GM10248 (cell line): ENCODE measurements at regions of chr11 and their contacts with region 1.

Region 1: DNA sequence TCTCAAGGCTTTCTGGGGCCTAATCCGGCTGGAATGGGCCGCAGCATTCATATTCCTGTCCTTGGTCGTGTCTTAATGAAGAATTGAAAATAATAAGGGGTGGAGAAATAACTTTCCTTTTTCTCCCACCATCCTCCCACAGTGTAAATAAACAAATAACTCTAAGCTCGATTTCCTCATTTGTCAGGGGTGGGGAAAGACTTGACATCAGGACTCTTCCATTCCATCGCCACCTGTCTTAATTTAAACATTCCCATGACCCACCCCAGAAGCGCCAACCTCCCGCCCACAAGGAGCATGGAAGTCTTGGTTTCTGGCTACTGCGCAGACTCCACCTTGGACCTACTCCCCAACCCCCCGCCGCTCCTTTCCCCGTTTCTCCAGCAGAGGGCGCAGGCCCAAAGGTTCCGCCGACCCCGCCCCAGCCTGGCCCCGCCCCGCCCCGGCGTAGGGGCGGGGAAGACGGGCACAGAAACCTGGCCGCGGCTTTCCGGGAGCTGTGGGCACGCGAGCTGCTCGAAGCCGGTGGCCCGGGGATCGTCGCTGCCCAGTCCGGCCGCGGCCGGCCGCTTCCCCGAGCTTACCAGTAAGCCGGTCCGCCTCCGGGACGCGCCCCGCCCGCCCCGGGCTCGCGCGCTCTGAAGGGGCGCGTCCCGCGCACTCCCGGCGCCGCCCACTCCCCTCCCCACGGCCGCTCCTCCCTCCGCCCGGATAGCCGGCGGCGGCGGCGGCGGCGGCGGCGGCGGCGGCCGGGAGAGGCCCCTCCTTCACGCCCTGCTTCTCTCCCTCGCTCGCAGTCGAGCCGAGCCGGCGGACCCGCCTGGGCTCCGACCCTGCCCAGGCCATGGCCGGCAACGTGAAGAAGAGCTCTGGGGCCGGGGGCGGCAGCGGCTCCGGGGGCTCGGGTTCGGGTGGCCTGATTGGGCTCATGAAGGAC is at the start of gene CBL:
- DNase-seq: peak; percentile 95
- CTCF ChIP-seq: peak; percentile 81

Region 2: DNA sequence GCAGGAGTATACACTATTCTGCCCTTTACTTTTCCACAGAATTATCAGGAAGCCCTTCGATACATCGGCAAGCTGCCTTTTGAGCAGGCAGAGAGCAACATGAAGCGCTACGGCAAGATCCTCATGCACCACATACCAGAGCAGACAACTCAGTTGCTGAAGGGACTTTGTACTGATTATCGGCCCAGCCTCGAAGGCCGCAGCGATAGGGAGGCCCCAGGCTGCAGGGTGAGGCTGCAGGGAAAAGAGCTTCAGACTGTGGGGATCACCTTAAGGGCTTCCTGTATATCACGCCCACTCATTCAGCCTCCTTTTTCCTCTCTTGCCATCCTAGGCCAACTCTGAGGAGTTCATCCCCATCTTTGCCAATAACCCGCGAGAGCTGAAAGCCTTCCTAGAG is 128.0 kb before region 1 on chr11:
- CTCF ChIA-PET with region 1: no interaction called
- POLR2A ChIA-PET with region 1: no interaction called
- DNase-seq: no peak
- CTCF ChIP-seq: no peak

Region 3: DNA sequence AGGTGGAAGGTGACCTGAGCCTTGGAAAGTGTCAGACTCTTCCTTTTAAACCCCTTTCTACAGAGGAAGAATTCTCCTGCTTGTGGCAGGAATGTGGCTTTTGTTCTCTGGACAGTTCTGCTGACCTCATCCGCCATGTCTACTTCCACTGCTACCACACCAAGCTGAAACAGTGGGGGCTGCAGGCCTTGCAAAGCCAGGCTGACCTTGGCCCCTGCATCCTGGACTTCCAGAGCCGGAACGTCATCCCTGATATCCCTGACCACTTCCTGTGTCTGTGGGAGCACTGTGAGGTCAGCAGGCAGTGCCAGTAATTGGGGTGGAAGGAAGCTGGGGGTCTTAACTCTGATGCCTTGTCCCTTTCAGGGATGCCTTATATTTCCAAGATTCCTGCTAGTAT is 75.2 kb before region 1 on chr11:
- CTCF ChIA-PET with region 1: no interaction called
- POLR2A ChIA-PET with region 1: no interaction called
- DNase-seq: no peak
- CTCF ChIP-seq: no peak

Region 4: DNA sequence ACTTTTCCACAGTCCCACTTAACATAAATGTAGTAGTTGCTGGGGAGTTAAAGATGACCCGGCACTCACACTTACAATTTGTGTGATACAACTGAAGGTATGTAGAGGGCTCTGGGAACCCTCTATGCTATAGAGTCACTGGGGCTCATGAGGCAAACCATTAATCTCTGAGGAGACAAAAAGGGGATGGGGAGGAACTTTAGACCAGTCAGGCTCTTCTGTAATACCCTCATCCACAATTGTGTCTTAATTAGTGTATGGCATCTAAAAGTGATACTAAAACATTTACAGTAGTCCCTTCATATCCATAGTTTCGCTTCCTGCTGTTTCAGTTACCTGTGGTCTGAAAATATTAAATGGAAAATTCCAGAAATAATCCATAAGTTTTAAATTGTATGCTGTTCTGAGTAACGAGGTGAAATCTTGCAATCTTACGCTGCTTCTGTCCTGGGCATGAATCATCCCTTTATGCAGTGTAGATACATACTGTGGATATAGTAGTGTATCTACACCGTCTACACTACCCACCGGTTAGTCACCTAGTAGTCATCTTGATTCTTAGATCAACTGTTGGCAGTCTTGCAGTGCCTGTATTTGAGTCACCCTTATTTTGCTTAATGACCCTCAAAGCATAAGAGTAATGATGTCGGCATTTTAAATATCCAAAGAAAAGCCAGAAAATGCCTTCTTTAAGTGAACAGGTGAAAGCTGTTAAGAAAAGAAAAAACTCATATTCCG is 12.5 kb after region 1 on chr11:
- CTCF ChIA-PET with region 1: interaction called, 21 read pairs
- POLR2A ChIA-PET with region 1: no interaction called
- DNase-seq: no peak
- CTCF ChIP-seq: no peak

Region 5: GRCh38 chr11:119262668-119263351 is 57.0 kb after region 1 on chr11:
- CTCF ChIA-PET with region 1: interaction called, 14 read pairs
- POLR2A ChIA-PET with region 1: no interaction called
- DNase-seq: peak; percentile 19
- CTCF ChIP-seq: no peak

Region 6: DNA sequence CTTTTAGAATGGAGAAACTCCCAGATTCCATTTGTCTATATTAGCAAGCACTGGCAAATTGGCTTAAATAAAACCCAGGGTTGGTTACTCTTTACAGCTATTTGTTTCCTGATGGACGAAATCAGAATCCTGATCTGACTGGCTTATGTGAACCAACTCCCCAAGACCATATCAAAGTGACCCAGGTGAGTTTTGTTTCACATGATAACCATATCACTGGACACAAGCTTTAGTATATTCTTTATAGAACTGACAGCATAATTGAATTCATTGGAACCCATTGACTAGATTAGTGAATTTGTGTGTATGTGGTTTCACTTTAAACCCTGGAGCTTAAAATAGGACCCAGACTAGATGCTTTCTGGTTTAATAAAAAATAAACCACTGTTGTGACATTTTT is 71.8 kb after region 1 on chr11:
- CTCF ChIA-PET with region 1: interaction called, 10 read pairs
- POLR2A ChIA-PET with region 1: no interaction called
- DNase-seq: no peak
- CTCF ChIP-seq: no peak